Activated naive CD4-positive, alpha-beta T cell treated with anti-CD3 and anti-CD28 coated beads for 36 hours (primary cell): ENCODE measurements at regions of chr5 and their contacts with region 1.

Region 1: GRCh38 chr5:137754126-137754960 is at the start of gene HNRNPA0:
- DNase-seq: peak; percentile 97
- H3K4me3 Mint-ChIP-seq: peak within 1 kb of the TSS; percentile 92
- H3K27ac Mint-ChIP-seq: peak within 1 kb of the TSS; percentile 98
- H3K4me1 Mint-ChIP-seq: peaks cover 19% of the 10 kb centered on the region
- H3K27me3 Mint-ChIP-seq: no peaks in the 10 kb centered on the region
- total RNA-seq, gene HNRNPA0: 27.2 to 28.6 TPM

Region 2: DNA sequence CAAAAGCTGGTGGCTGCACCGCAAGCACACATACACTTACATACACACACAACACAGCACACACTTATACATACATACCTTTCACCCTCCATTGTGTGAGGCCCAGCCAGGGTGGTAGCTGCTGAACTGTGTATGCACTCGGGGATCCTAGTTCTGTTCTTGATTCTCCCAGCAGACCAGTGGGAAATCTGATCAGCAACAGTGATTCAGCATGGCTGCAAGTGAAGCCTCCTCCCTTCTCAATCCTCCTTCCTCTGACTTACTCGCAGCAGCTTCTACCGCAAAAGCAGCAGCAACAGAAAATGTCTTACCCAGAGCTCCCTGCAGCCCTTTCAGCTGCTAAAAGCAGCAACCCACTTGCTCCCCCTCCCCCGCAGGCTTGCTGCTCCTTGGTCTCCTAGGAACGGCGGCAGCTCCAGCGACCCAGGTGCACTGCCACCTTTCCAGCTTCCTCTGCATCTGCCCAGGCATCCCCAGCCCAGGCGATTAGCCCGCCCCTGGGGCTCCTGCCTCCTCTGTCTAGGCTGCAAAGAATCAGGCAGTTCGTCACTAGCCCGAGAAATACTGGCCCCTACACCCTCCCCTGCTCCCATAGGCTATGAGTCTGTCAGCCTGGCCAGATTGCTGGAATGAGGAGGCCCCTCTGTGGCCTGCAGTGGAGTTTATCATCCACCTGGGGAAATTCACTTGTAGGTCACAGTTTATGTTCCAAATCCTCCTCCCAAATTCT is 18.6 kb before region 1 on chr5 and contains the start of gene KLHL3:
- CTCF ChIA-PET with region 1: interaction called, 56 read pairs
- intact Hi-C with region 1: loop called (anchors 1 kb)
- DNase-seq: peak; percentile 53
- H3K4me3 Mint-ChIP-seq: no peak within 1 kb of the TSS
- H3K27ac Mint-ChIP-seq: no peak within 1 kb of the TSS
- H3K4me1 Mint-ChIP-seq: peaks cover 53% of the 10 kb centered on the region
- H3K27me3 Mint-ChIP-seq: no peaks in the 10 kb centered on the region
- total RNA-seq, gene KLHL3: 1.7 to 2.0 TPM

Region 3: GRCh38 chr5:137833463-137833862 is 79.1 kb after region 1 on chr5:
- CTCF ChIA-PET with region 1: no interaction called
- intact Hi-C with region 1: no loop called
- DNase-seq: no peak
- H3K4me3 Mint-ChIP-seq: no peak overlapping the region
- H3K27ac Mint-ChIP-seq: no peak overlapping the region
- H3K4me1 Mint-ChIP-seq: no peaks in the 10 kb centered on the region
- H3K27me3 Mint-ChIP-seq: no peaks in the 10 kb centered on the region

Region 4: DNA sequence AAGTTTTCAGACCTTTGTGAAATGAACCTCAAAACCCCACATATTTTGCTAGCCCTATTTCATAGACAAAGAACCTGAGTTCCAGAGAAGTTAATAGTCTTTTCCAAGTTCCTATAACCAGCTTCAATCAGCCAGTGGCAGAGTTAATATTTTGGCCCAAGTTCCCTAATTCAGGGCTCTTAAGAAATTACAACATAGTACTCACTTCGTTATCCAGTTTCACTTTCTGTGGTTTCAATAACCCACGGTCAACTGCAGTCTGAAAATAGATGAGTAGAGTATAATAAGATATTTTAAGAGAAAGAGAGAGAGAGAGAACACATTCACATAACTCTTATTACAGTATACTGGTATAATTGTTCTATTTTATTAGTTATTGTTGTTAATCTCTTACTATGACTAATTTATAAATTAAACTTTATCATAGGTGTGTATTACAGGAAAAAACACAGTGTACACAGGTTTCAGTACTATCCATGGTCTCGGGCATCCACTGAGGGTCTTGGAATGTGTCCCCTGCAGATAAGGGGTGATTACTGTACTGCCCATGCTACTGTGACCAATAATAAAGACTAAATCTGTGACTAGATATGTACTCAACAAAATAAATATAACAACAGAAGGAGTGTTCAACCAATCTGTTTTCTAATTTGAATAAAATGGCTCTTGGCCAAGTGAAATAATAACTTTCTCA is 104.0 kb after region 1 on chr5:
- CTCF ChIA-PET with region 1: no interaction called
- intact Hi-C with region 1: no loop called
- DNase-seq: no peak
- H3K4me3 Mint-ChIP-seq: peak overlapping the region; percentile 31
- H3K27ac Mint-ChIP-seq: no peak overlapping the region
- H3K4me1 Mint-ChIP-seq: peaks cover 21% of the 10 kb centered on the region
- H3K27me3 Mint-ChIP-seq: no peaks in the 10 kb centered on the region

Region 5: GRCh38 chr5:137938751-137939143 is 184.4 kb after region 1 on chr5:
- CTCF ChIA-PET with region 1: interaction called, 3 read pairs
- intact Hi-C with region 1: loop called (anchors 1 kb)
- DNase-seq: no peak
- H3K4me3 Mint-ChIP-seq: no peak overlapping the region
- H3K27ac Mint-ChIP-seq: peak overlapping the region; percentile 77
- H3K4me1 Mint-ChIP-seq: peaks cover 39% of the 10 kb centered on the region
- H3K27me3 Mint-ChIP-seq: no peaks in the 10 kb centered on the region

Region 6: DNA sequence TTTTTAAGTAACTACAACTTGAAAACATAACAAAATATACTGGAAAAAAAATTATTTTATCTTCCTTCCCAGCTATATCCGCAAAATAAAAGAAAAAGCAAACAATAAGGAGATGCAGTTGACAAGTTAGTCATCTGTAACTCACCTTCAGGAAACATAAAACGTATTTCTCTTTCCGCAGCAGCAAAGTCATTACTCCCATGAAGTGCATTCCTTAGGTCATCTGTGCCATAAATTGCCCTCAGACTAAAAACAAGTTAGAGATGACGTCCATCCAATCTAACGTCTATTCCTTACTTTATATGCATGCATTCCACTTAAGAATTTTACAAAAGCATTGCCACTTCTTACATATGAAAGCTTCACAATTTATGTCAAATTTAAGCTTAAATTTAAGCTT is 374.0 kb after region 1 on chr5:
- CTCF ChIA-PET with region 1: no interaction called
- intact Hi-C with region 1: loop called (anchors 1 kb)
- DNase-seq: no peak
- H3K4me3 Mint-ChIP-seq: no peak overlapping the region
- H3K27ac Mint-ChIP-seq: no peak overlapping the region
- H3K4me1 Mint-ChIP-seq: peaks cover 2% of the 10 kb centered on the region
- H3K27me3 Mint-ChIP-seq: no peaks in the 10 kb centered on the region

Region 7: DNA sequence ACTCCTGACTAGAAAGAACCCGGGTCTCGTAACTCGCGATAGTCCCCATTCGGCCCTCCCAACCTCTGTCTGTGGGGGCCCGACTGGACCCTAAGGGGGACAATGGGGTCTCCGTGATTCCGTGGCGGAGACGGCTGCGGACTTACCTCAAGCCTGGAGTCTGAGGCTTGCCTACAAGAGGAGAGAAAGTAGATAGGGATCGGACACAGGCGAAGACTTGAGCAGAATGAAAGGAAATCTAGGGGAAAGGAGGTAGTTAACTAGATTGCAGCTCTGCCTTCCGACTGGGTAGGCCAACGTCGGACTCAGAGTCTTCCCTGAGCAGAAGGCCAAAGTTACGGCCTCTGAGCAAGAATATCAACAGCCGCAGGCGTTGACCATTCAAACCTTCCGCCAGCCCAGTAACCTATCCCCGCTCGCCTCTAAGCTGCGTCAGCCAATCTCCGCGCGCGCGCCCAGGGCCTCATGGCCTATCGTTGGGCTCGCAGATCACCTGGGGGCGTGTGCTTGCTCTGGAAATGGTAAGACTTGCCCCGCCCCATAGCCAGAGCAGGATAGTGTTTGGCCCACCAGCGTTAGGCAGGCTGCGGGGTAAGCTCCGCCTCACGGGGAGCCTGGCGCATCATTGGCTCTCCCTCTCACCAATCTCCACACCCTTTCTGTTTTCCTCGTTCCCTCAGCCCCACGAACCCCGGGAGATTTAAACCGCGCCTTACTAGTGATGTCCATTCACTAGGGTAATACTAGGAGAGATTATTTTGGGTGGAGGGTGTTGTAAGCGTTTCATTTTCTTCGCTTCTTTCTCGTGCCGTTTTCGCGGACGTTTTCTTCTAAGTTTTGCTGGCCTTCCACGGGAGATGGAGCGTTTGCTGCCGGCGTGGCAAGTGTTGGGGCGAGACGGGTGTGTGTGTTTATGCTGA is 577.4 kb after region 1 on chr5 and contains the start of gene CDC25C:
- CTCF ChIA-PET with region 1: no interaction called
- intact Hi-C with region 1: loop called (anchors 2 kb)
- DNase-seq: peak; percentile 99
- H3K4me3 Mint-ChIP-seq: peak within 1 kb of the TSS; percentile 81
- H3K27ac Mint-ChIP-seq: peak within 1 kb of the TSS; percentile 83
- H3K4me1 Mint-ChIP-seq: peaks cover 9% of the 10 kb centered on the region
- H3K27me3 Mint-ChIP-seq: no peaks in the 10 kb centered on the region
- total RNA-seq, gene CDC25C: 23.2 to 26.6 TPM

Region 8: DNA sequence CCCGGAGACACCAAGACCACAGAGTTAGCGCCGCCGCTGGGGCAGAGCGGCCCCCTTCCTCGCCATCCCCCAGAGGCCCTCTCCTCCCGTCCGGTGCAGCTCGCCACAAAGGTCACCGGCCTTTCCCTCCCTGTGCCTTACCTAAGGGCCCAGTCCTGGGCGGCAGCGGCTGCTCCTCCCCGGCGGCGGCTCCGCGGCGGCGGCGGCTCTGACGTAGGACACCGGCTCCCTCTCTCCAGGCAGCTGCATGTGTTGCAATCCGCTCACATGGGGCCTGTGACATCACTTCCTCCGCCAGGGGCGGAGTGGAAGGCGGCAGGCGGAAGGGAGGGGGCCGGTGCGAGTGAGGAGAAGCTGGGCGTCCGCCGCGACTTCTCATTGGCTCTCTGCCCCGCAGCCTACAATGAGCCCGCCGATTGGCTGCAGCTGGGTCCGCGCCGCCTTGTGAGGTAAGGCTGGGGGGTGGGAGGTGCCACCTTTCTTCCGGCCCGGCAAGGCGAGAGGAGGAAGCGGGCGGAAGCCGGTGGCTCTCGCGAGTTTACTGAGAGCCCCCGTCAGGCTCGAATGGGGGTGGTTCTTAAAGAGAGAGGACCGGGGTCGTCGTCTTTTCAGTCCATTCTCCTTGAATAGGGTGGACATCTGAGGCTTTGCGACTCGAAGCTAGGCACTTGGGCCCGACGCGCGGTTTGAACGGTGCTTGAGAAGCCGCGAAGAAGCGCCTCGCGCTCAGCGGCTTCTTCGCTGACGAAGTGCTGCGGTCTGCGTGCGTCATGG is 788.8 kb after region 1 on chr5 and contains the start of gene ETF1:
- CTCF ChIA-PET with region 1: no interaction called
- intact Hi-C with region 1: loop called (anchors 1 kb)
- DNase-seq: peak; percentile 100
- H3K4me3 Mint-ChIP-seq: peak within 1 kb of the TSS; percentile 100
- H3K27ac Mint-ChIP-seq: peak within 1 kb of the TSS; percentile 100
- H3K4me1 Mint-ChIP-seq: peaks cover 71% of the 10 kb centered on the region
- H3K27me3 Mint-ChIP-seq: no peaks in the 10 kb centered on the region
- total RNA-seq, gene ETF1: 99.8 to 107 TPM